ENCODE measurements at regions of chr12 and their contacts with region 1.

Region 1: GRCh38 chr12:57751788-57752667 is at the start of gene CDK4:
- DNase-seq: peak; percentile 100
- ATAC-seq: peak; percentile 78
- H3K4me3 ChIP-seq: peak within 1 kb of the TSS; percentile 51 to 84 (median 78)
- H3K4me3 Mint-ChIP-seq: peak within 1 kb of the TSS; percentile 91
- H3K27ac ChIP-seq: peak within 1 kb of the TSS; percentile 74 to 98
- H3K27ac Mint-ChIP-seq: peak within 1 kb of the TSS; percentile 95
- H3K4me1 ChIP-seq: peaks cover 39 to 50% of the 10 kb centered on the region in 2 donors
- H3K4me1 Mint-ChIP-seq: peaks cover 55% of the 10 kb centered on the region
- H3K27me3 ChIP-seq: no peaks in the 10 kb centered on the region
- H3K27me3 Mint-ChIP-seq: no peaks in the 10 kb centered on the region
- CTCF ChIP-seq: no peak
- total RNA-seq, gene CDK4: 43.1 and 44.6 TPM in 2 replicates

Region 2: DNA sequence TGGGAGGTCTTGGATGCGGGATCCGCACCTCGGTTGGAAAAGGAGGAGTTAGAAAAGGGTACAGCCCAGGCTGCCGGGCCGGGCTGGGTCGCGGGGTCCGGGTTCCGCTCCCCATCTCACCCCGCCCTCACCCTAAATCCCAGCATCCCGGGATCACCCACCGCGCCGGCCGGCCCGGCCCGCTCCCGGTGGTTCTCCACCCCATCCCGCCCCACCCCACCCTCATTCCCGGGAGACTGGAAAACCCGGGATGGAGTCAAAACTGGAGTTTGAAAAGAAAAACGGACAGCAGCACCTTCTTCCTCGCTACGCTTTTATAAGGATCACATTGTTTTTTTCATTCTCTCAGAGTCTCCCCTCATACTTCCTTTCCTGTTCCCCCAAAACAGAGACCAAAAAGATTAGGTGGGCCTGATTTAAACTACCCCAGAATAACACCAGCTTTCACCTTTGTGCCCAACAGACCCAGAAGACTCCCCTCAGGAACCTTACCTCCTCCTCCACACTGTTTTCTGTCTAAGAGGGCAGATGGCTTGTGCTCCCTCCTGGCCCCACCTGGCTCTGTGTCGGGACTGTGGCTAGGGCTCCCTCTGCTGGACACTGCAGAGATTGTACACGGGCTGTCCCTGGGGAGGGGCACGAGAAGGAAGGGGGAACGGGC is 289.6 kb before region 1 on chr12:
- CTCF ChIA-PET with region 1: no interaction called
- POLR2A ChIA-PET with region 1: no interaction called
- intact Hi-C with region 1: loop called (anchors 10 kb)
- DNase-seq: peak; percentile 96
- ATAC-seq: peak; percentile 64
- H3K4me3 ChIP-seq: peak overlapping the region; percentile 58 to 93 (median 81)
- H3K4me3 Mint-ChIP-seq: peak overlapping the region; percentile 92
- H3K27ac ChIP-seq: peak overlapping the region; percentile 15 to 58
- H3K27ac Mint-ChIP-seq: peak overlapping the region; percentile 93
- H3K4me1 ChIP-seq: peaks cover 23 to 48% of the 10 kb centered on the region in 2 donors
- H3K4me1 Mint-ChIP-seq: peaks cover 40% of the 10 kb centered on the region
- H3K27me3 ChIP-seq: no peaks in the 10 kb centered on the region
- H3K27me3 Mint-ChIP-seq: no peaks in the 10 kb centered on the region
- CTCF ChIP-seq: peak; percentile 88

Region 3: GRCh38 chr12:57546438-57547383 is 205.3 kb before region 1 on chr12 and contains the start of gene DCTN2:
- CTCF ChIA-PET with region 1: no interaction called
- POLR2A ChIA-PET with region 1: no interaction called
- intact Hi-C with region 1: loop called (anchors 1 kb)
- DNase-seq: peak; percentile 94
- ATAC-seq: peak; percentile 97
- H3K4me3 ChIP-seq: peak within 1 kb of the TSS; percentile 68 to 96 (median 85)
- H3K4me3 Mint-ChIP-seq: peak within 1 kb of the TSS; percentile 99
- H3K27ac ChIP-seq: peak within 1 kb of the TSS; percentile 58 to 90
- H3K27ac Mint-ChIP-seq: peak within 1 kb of the TSS; percentile 87
- H3K4me1 ChIP-seq: peaks cover 21 to 27% of the 10 kb centered on the region in 2 donors
- H3K4me1 Mint-ChIP-seq: peaks cover 51% of the 10 kb centered on the region
- H3K27me3 ChIP-seq: peaks cover 0 to 26% (median 10%) of the 10 kb centered on the region in 4 experiments
- H3K27me3 Mint-ChIP-seq: peaks cover 18% of the 10 kb centered on the region
- CTCF ChIP-seq: no peak
- total RNA-seq, gene DCTN2: 94.3 and 97.6 TPM in 2 replicates

Region 4: DNA sequence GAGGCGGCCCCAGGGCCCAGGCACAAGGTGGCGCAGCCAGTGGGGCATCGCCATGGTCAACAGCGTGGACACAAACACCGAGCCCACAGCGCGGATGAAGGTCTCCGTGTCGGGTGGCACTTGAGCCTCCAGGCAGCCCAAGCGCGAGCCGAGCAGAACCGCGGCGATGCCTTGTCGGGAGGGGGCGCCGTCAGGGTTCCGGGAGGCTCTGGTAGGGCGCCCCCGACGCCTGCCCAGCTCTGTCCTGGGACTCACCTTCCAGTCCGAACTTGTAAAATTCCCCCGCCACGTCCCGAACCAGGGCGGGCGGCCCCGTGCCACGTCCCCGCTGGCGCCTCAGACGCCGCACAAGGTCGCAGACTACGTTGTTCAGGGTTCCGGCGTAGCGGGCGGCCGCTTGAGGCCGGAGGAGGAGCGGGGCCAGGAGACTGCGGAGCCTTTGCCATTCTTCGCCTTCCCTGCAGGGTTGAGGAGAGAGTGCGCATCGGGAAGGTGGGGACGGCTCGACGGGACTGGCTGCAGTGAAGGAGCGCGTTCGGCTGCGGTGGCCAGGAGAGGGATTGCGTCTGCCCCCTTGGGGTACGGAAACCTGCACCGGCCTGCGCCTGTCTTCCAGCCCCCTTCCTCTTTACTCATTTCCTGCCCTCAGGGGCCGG is 13.1 kb after region 1 on chr12:
- CTCF ChIA-PET with region 1: interaction called, 37 read pairs
- POLR2A ChIA-PET with region 1: interaction called, 4 read pairs
- intact Hi-C with region 1: loop called (anchors 1 kb)
- DNase-seq: peak; percentile 68
- ATAC-seq: peak; percentile 78
- H3K4me3 ChIP-seq: peak overlapping the region; percentile 22 to 63 (median 58)
- H3K4me3 Mint-ChIP-seq: peak overlapping the region; percentile 93
- H3K27ac ChIP-seq: no peak overlapping the region
- H3K27ac Mint-ChIP-seq: no peak overlapping the region
- H3K4me1 ChIP-seq: peaks cover 29 to 32% of the 10 kb centered on the region in 2 donors
- H3K4me1 Mint-ChIP-seq: peaks cover 32% of the 10 kb centered on the region
- H3K27me3 ChIP-seq: peaks cover 0 to 38% (median 26%) of the 10 kb centered on the region in 4 experiments
- H3K27me3 Mint-ChIP-seq: peaks cover 24% of the 10 kb centered on the region
- CTCF ChIP-seq: peak; percentile 57

Region 5: DNA sequence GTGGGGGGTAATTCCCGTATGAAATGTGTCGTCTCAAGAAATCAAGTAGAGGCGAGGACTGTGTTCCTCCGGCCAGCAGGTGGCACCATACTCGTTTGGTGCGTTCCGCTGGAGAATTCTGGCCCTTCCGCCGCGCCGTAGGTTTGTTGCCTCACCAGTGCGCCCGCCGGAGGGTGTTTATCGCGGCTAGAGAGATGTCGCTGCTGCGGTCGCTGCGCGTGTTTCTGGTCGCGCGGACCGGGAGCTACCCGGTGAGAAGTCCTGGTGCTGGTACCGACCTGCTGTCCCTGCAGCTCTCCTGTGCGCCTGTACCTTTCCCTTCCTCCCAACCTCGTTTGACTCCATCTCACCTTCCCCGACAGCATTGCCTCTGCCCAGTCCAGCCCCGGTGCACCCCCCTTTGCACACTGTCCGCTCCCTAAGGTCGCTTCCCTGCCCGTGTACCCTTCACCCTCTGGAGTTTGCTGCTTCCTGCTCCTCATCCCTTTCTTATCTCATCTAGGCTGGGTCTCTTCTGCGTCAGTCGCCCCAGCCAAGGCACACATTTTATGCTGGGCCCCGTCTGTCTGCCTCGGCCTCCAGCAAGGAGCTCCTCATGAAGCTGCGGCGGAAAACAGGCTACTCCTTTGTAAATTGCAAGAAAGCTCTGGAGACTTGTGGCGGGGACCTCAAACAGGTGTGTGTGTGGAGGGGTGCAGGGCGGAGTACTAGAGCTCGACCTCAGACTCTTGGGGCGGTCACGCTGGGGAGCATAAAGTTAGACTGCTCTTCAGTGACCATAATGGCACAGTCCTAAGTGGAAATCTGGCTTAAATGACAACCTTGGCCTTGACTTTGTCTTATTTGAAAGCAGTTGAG is 30.8 kb after region 1 on chr12 and contains the start of gene TSFM:
- CTCF ChIA-PET with region 1: interaction called, 31 read pairs
- POLR2A ChIA-PET with region 1: no interaction called
- intact Hi-C with region 1: loop called (anchors 1 kb)
- DNase-seq: peak; percentile 96
- ATAC-seq: peak; percentile 99
- H3K4me3 ChIP-seq: peak within 1 kb of the TSS; percentile 83 to 100 (median 98)
- H3K4me3 Mint-ChIP-seq: peak within 1 kb of the TSS; percentile 100
- H3K27ac ChIP-seq: peak within 1 kb of the TSS; percentile 45 to 77
- H3K27ac Mint-ChIP-seq: peak within 1 kb of the TSS; percentile 96
- H3K4me1 ChIP-seq: peaks cover 9 to 17% of the 10 kb centered on the region in 2 donors
- H3K4me1 Mint-ChIP-seq: peaks cover 18% of the 10 kb centered on the region
- H3K27me3 ChIP-seq: no peaks in the 10 kb centered on the region
- H3K27me3 Mint-ChIP-seq: no peaks in the 10 kb centered on the region
- CTCF ChIP-seq: peak; percentile 94
- total RNA-seq, gene TSFM: 20.6 and 20.9 TPM in 2 replicates

Region 6: GRCh38 chr12:57846577-57847319 is 94.7 kb after region 1 on chr12 and contains the start of gene CTDSP2:
- CTCF ChIA-PET with region 1: no interaction called
- POLR2A ChIA-PET with region 1: interaction called, 4 read pairs
- intact Hi-C with region 1: loop called (anchors 5 kb)
- DNase-seq: peak; percentile 91
- ATAC-seq: peak; percentile 70
- H3K4me3 ChIP-seq: peak within 1 kb of the TSS; percentile 48 to 98 (median 93)
- H3K4me3 Mint-ChIP-seq: peak within 1 kb of the TSS; percentile 84
- H3K27ac ChIP-seq: peak within 1 kb of the TSS; percentile 75 to 84
- H3K27ac Mint-ChIP-seq: peak within 1 kb of the TSS; percentile 90
- H3K4me1 ChIP-seq: peaks cover 43 to 52% of the 10 kb centered on the region in 2 donors
- H3K4me1 Mint-ChIP-seq: peaks cover 47% of the 10 kb centered on the region
- H3K27me3 ChIP-seq: peaks cover 0 to 7% (median 1%) of the 10 kb centered on the region in 4 experiments
- H3K27me3 Mint-ChIP-seq: peaks cover 9% of the 10 kb centered on the region
- CTCF ChIP-seq: no peak
- total RNA-seq, gene CTDSP2: 203 and 209 TPM in 2 replicates